AG04449 (cell line): ENCODE measurements at regions of chr4 and their contacts with region 1.

Region 1: GRCh38 chr4:6873792-6874461 is 35.7 kb upstream of the TBC1D14 start:
- DNase-seq: no peak
- H3K4me3 ChIP-seq: no peak overlapping the region
- CTCF ChIP-seq: peak; percentile 83

Region 2: GRCh38 chr4:6732441-6733357 is 141.2 kb before region 1 on chr4:
- CTCF ChIA-PET with region 1: interaction called, 19 read pairs
- POLR2A ChIA-PET with region 1: no interaction called
- DNase-seq: peak; percentile 67
- H3K4me3 ChIP-seq: no peak overlapping the region
- CTCF ChIP-seq: no peak

Region 3: DNA sequence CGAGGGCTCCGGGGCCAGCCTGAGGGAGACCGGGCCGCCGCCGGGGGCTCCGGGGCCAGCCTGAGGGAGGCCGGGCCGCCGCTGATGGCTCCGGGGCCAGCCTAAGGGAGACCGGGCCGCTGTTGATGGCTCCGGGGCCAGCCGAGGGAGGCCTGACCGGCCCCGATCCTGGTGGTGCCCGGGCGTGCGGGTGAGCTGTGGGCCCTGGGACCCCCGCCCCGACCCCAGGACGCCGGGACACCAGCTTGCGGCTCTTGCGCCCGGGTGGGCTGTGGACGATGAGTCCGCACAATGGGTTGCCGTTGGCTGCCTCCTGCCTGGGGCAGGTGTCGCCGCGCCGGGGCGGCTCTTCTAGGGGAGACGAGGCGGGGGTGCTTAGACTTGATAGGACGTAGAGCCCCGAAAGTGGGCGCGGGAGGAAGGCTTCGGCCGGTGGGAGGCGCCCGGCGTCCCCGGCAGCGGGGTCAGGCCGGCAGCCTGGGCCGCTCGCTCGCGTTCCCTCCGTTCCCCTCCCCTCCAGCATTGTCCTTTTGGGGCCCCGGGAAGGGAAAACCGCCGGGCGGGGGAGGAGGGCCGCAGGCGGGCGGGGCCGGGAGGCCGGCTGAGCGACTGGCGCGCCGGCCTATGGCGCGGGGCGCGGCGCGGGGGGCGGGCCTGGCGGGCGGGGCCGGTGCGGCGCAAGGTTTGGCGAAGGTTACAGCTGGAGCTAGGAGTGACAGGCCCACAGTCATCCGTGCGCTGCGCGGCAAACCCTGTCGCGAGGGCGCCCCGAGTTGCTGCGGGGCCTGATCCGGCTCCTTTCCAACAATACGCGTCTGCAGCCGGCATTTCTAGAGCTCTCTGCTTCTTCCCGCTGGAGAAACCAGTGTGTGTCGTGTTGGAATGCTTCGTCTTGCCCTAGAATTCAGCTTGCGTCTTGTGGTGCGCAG is 90.6 kb before region 1 on chr4:
- CTCF ChIA-PET with region 1: interaction called, 26 read pairs
- POLR2A ChIA-PET with region 1: no interaction called
- DNase-seq: no peak
- H3K4me3 ChIP-seq: peak overlapping the region; percentile 86
- CTCF ChIP-seq: no peak

Region 4: GRCh38 chr4:6825403-6825802 is 48.5 kb before region 1 on chr4:
- CTCF ChIA-PET with region 1: interaction called, 12 read pairs
- POLR2A ChIA-PET with region 1: no interaction called
- DNase-seq: no peak
- H3K4me3 ChIP-seq: no peak overlapping the region
- CTCF ChIP-seq: no peak

Region 5: GRCh38 chr4:6885951-6886557 is 12.1 kb after region 1 on chr4:
- CTCF ChIA-PET with region 1: interaction called, 129 read pairs
- POLR2A ChIA-PET with region 1: interaction called, 5 read pairs
- DNase-seq: no peak
- H3K4me3 ChIP-seq: peak overlapping the region; percentile 23; the same call in 1 of the 2 replicates
- CTCF ChIP-seq: peak; percentile 39

Region 6: GRCh38 chr4:7067452-7068278 is 193.7 kb after region 1 on chr4 and contains the start of gene GRPEL1:
- CTCF ChIA-PET with region 1: interaction called, 15 read pairs
- POLR2A ChIA-PET with region 1: no interaction called
- DNase-seq: peak; percentile 96
- H3K4me3 ChIP-seq: peak within 1 kb of the TSS; percentile 89
- CTCF ChIP-seq: no peak

Region 7: GRCh38 chr4:7101692-7102515 is 228.0 kb after region 1 on chr4:
- CTCF ChIA-PET with region 1: no interaction called
- POLR2A ChIA-PET with region 1: no interaction called
- DNase-seq: no peak
- H3K4me3 ChIP-seq: peak overlapping the region; percentile 43
- CTCF ChIP-seq: peak; percentile 84